A673 (cell line): ENCODE measurements at regions of chr12 and their contacts with region 1.

Region 1: DNA sequence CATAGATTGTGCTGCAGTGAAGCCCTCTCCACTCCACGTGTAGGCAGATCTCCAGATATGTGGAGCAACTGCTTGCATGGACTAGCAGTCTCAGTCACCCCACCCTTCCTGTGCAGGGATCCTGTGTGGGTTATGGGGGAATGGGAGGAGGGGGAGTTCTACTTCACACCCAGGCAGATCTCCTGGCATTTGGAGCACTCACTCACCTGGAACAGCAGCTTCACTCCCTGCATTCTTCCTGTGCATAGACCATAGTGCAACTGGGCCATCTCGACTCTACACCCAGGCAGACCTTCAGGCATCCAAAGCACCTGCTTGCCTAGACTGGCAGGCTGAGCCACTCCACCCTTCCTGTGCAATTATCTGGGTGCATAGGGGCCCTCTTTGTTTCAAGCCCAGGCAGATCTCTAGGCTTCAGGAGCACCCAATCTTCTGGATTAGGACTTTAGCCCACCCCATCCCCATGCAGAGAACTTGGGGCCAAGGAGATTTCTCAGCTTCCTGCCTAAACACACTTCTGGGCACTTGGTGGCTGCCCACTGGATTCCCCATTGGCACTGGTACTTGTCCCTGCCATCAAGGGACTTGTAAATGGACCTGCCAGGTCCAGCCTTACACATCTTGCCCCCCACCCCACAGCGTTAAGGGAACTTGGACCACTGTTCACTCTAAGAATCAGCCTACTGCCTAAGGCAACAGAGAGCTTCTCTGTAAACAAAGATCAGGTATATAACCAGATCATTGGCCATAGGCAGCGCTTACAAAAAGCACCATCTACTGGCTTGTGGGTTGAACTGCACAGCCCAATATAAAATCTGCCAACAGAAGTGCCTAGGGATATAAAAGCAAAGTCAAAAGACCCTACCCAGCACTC is 95.8 kb upstream of the PCED1B start:
- DNase-seq: peak; percentile 86
- H3K4me3 ChIP-seq: peak overlapping the region; percentile 17
- H3K27ac ChIP-seq: no peak overlapping the region
- H3K4me1 ChIP-seq: peaks cover 10% of the 10 kb centered on the region
- H3K27me3 ChIP-seq: no peaks in the 10 kb centered on the region
- CTCF ChIP-seq: peak; percentile 93

Region 2: GRCh38 chr12:46751173-46751572 is 232.5 kb before region 1 on chr12:
- CTCF ChIA-PET with region 1: interaction called, 3 read pairs
- POLR2A ChIA-PET with region 1: no interaction called
- intact Hi-C with region 1: loop called (anchors 5 kb)
- DNase-seq: peak; percentile 78
- H3K4me3 ChIP-seq: no peak overlapping the region
- H3K27ac ChIP-seq: peak overlapping the region; percentile 83
- H3K4me1 ChIP-seq: peaks cover 27% of the 10 kb centered on the region
- H3K27me3 ChIP-seq: no peaks in the 10 kb centered on the region
- CTCF ChIP-seq: no peak

Region 3: DNA sequence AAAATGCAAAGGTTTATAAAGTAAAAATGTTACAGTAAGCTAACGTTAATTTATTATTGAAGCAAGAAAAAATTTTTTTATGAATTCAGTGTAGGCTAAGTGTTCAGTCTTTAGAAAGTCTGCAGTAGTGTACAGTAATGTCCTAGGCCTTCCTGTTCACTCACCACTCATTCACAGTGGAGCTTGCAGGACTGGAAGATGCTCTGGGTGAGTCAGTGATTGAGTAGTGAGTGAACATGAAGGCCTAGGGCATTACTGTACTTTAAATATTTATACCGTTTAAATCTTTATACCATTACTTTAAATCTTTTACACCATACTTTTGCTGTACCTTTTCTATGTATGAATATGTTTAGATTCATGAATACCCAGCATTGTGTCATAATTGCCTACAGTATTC is 37.5 kb before region 1 on chr12:
- CTCF ChIA-PET with region 1: interaction called, 8 read pairs
- POLR2A ChIA-PET with region 1: interaction called, 3 read pairs
- intact Hi-C with region 1: loop called (anchors 5 kb)
- DNase-seq: no peak
- H3K4me3 ChIP-seq: no peak overlapping the region
- H3K27ac ChIP-seq: no peak overlapping the region
- H3K4me1 ChIP-seq: peaks cover 59% of the 10 kb centered on the region
- H3K27me3 ChIP-seq: no peaks in the 10 kb centered on the region
- CTCF ChIP-seq: no peak